Activated naive CD4-positive, alpha-beta T cell treated with anti-CD3 and anti-CD28 coated beads for 36 hours (primary cell): ENCODE measurements at regions of chr11 and their contacts with region 1.

Region 1: DNA sequence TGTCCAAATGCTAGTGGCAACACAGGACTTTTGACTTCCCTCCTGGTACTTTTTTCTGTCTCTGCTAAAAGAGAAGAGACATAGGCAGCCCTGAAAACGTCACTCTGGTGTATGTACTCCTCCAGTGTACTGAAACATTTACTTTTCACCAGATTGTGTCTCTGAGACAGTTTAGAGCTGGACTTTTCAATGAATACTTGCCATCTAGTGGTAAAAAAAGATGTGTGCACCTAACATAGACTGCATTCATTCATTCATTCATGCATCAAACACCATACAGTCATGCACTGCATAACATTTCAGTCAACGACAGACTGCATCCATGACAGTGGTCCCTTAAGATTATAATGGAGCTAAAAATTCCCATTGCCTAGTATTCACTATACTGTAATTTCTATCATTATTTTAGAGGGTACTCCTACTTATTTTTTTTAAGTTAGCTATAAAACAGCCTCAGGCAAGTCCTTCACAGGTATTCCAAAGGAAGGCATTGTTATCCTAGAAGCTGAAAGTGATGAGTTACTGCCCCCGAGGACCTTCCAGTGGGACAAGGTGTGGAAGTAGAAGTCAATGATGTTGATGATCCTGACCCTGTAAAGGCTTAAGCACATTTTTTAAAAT is 186.2 kb downstream of the SPON1 start:
- DNase-seq: no peak
- H3K4me3 Mint-ChIP-seq: no peak overlapping the region
- H3K27ac Mint-ChIP-seq: no peak overlapping the region
- H3K4me1 Mint-ChIP-seq: peaks cover 13% of the 10 kb centered on the region
- H3K27me3 Mint-ChIP-seq: no peaks in the 10 kb centered on the region

Region 2: DNA sequence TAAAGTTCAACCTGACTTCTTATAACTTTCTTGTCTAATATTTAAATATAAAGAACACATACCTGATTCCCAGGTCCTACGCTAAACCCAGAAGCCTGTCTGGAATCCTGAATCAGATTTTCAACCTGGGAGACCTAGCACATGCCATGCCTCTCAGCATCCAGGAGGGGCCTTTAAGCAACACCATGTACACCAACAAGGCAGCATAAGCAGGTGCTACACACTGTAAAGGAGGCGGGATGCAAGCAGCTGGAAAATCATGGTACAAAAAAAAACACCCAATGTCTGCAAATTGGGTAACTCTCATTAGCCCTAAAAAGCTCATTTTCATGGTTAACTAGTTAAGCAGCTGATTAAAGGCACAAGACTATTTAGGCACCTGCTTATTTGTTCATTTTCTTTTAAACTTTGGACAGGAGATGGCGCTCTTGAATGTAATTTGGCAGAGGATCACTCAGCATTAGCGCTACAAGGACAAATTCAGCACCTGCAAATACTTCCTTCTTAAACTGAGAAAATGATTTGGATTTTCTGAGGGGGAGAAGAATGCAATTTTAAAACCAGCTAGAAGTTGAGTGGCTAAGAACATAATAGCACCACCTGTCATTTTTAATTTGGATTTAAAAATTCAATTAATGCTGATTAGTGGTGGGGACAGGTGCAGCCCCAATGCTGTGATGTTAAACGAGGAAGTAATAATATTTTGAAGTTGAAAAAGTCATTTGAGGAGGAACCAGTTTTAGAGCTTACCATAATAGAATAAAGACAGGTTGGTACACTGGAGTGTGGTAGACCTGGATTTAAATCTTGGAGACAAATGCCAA is 376.3 kb before region 1 on chr11:
- CTCF ChIA-PET with region 1: interaction called, 31 read pairs
- intact Hi-C with region 1: loop called (anchors 1 kb)
- DNase-seq: peak; percentile 35
- H3K4me3 Mint-ChIP-seq: no peak overlapping the region
- H3K27ac Mint-ChIP-seq: no peak overlapping the region
- H3K4me1 Mint-ChIP-seq: no peaks in the 10 kb centered on the region
- H3K27me3 Mint-ChIP-seq: no peaks in the 10 kb centered on the region

Region 3: DNA sequence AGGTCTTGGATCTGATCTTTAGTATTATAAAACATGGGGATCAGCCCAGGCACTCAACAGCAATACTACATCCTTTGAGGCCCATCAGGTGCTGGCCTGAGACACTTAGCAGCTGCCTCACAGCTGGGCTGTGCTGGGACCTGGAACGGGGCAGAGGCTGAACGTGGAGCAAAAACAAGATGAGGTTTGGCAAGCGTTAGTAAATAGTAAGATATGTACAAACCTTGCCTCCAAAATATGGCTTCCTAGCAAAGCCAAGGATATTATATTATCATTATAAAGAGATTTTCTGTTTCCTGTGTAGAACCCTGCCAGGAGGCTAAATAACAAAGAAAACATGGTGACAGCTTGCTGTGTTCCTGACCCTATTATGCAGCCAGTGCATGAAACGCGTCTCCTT is 246.2 kb before region 1 on chr11:
- CTCF ChIA-PET with region 1: no interaction called
- intact Hi-C with region 1: no loop called
- DNase-seq: no peak
- H3K4me3 Mint-ChIP-seq: no peak overlapping the region
- H3K27ac Mint-ChIP-seq: no peak overlapping the region
- H3K4me1 Mint-ChIP-seq: no peaks in the 10 kb centered on the region
- H3K27me3 Mint-ChIP-seq: no peaks in the 10 kb centered on the region

Region 4: GRCh38 chr11:13955971-13956421 is 192.8 kb before region 1 on chr11:
- CTCF ChIA-PET with region 1: interaction called, 86 read pairs
- intact Hi-C with region 1: loop called (anchors 1 kb)
- DNase-seq: peak; percentile 71
- H3K4me3 Mint-ChIP-seq: no peak overlapping the region
- H3K27ac Mint-ChIP-seq: no peak overlapping the region
- H3K4me1 Mint-ChIP-seq: no peaks in the 10 kb centered on the region
- H3K27me3 Mint-ChIP-seq: peaks cover 5% of the 10 kb centered on the region

Region 5: GRCh38 chr11:13970986-13971385 is 177.8 kb before region 1 on chr11:
- CTCF ChIA-PET with region 1: interaction called, 33 read pairs
- intact Hi-C with region 1: loop called (anchors 1 kb)
- DNase-seq: peak; percentile 53
- H3K4me3 Mint-ChIP-seq: no peak overlapping the region
- H3K27ac Mint-ChIP-seq: no peak overlapping the region
- H3K4me1 Mint-ChIP-seq: peaks cover 16% of the 10 kb centered on the region
- H3K27me3 Mint-ChIP-seq: peaks cover 6% of the 10 kb centered on the region

Region 6: GRCh38 chr11:14010665-14011064 is 138.1 kb before region 1 on chr11:
- CTCF ChIA-PET with region 1: no interaction called
- intact Hi-C with region 1: no loop called
- DNase-seq: no peak
- H3K4me3 Mint-ChIP-seq: no peak overlapping the region
- H3K27ac Mint-ChIP-seq: no peak overlapping the region
- H3K4me1 Mint-ChIP-seq: no peaks in the 10 kb centered on the region
- H3K27me3 Mint-ChIP-seq: no peaks in the 10 kb centered on the region

Region 7: GRCh38 chr11:14249121-14249963 is 100.6 kb after region 1 on chr11:
- CTCF ChIA-PET with region 1: interaction called, 8 read pairs
- intact Hi-C with region 1: loop called (anchors 2 kb)
- DNase-seq: peak; percentile 82
- H3K4me3 Mint-ChIP-seq: no peak overlapping the region
- H3K27ac Mint-ChIP-seq: no peak overlapping the region
- H3K4me1 Mint-ChIP-seq: peaks cover 15% of the 10 kb centered on the region
- H3K27me3 Mint-ChIP-seq: no peaks in the 10 kb centered on the region

Region 8: DNA sequence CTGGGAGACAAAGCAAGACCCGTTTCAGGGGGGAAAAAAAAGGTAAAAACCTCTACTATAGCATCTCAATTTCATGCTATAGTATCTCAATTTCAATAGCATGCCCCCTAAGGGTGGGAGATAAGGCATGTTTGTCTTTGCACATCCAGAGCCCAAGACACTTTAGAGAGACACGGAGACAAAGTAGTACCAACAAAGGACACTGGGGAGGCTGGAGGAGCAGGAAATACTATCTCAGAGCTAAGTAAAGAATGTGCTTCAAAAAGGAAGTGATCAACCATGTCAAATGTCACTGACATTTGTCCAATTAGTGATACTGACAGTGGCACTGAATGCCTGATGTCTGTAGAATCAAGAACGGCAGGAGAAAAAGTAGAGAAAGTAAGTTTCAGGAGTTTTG is 141.7 kb after region 1 on chr11:
- CTCF ChIA-PET with region 1: no interaction called
- intact Hi-C with region 1: no loop called
- DNase-seq: no peak
- H3K4me3 Mint-ChIP-seq: no peak overlapping the region
- H3K27ac Mint-ChIP-seq: no peak overlapping the region
- H3K4me1 Mint-ChIP-seq: peaks cover 3% of the 10 kb centered on the region
- H3K27me3 Mint-ChIP-seq: no peaks in the 10 kb centered on the region

Region 9: GRCh38 chr11:14519917-14520746 is 371.4 kb after region 1 on chr11 and contains the start of gene PSMA1:
- CTCF ChIA-PET with region 1: no interaction called
- intact Hi-C with region 1: no loop called
- DNase-seq: peak; percentile 98
- H3K4me3 Mint-ChIP-seq: peak within 1 kb of the TSS; percentile 96
- H3K27ac Mint-ChIP-seq: peak within 1 kb of the TSS; percentile 97
- H3K4me1 Mint-ChIP-seq: peaks cover 24% of the 10 kb centered on the region
- H3K27me3 Mint-ChIP-seq: no peaks in the 10 kb centered on the region
- total RNA-seq, gene PSMA1: 367 to 375 TPM